AG04449 (cell line): ENCODE measurements at regions of chr1 and their contacts with region 1.

Region 1: GRCh38 chr1:182781841-182782586 is 7.6 kb upstream of the NPL start:
- DNase-seq: no peak
- H3K4me3 ChIP-seq: no peak overlapping the region
- CTCF ChIP-seq: peak; percentile 66

Region 2: GRCh38 chr1:182446033-182446669 is 335.9 kb before region 1 on chr1:
- CTCF ChIA-PET with region 1: interaction called, 26 read pairs
- POLR2A ChIA-PET with region 1: no interaction called
- DNase-seq: peak; percentile 0
- H3K4me3 ChIP-seq: no peak overlapping the region; the same call in 1 of the 2 replicates
- CTCF ChIP-seq: peak; percentile 56

Region 3: GRCh38 chr1:182635871-182636270 is 146.1 kb before region 1 on chr1:
- CTCF ChIA-PET with region 1: no interaction called
- POLR2A ChIA-PET with region 1: no interaction called
- DNase-seq: no peak
- H3K4me3 ChIP-seq: no peak overlapping the region
- CTCF ChIP-seq: no peak

Region 4: GRCh38 chr1:182720463-182720862 is 61.6 kb before region 1 on chr1:
- CTCF ChIA-PET with region 1: no interaction called
- POLR2A ChIA-PET with region 1: no interaction called
- DNase-seq: no peak
- H3K4me3 ChIP-seq: no peak overlapping the region
- CTCF ChIP-seq: peak; percentile 20

Region 5: DNA sequence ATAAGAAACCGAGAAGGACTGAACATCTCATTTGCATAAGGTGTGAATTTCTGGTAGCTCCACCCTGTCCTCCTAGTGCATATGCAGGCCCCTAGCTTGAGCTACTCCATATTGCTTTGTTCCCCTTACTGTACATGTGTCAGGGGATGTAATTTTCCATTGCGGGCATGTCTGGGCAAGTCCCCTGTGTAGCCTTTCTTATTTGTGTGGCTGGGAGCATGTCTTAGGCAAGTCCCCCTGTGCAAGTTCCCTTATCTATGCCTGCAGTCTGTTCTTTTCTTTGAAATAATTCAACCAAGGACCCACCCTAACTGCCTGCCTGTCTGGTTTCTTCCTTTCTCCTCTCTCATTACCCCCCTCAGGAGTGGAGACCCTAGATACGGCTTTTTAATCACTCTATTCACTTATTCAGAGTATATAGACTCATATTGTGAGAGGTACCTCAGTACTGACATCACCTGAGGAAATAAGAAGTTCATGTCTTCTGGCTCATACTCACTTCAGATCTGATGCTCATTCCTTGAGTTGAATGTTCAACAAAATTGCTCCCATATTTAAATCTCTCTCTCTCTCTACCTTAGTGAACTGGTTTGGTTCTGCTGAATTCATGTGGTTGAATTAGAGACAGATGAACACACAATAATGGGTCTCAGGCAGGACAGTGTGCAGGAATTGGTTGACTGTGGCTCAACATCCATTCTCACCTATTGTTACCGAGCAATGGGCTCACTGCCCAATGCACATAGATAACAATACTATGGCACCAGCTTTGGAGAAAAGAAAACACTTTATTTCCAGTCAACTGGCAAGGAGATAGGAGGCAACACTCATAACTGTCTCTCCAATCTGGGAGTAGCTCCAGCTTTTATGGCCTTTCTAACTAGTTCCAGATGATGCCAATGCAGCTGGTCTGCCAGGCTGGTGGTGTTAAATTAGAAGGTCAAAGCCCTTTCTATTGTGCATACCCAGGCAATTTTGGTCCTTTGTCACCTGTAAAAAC is 20.3 kb before region 1 on chr1:
- CTCF ChIA-PET with region 1: interaction called, 14 read pairs
- POLR2A ChIA-PET with region 1: no interaction called
- DNase-seq: no peak
- H3K4me3 ChIP-seq: no peak overlapping the region
- CTCF ChIP-seq: no peak